Pancreas (tissue), 10 donors: ENCODE measurements at regions of chr7 and their contacts with region 1.

Region 1: GRCh38 chr7:25259587-25260243 is 31.4 kb upstream of the NPVF start:
- DNase-seq: peak in 4 of 6 donors; percentile 29 to 82 (median 57)
- ATAC-seq: peak; percentile 82 to 93 (median 92)
- H3K4me3 ChIP-seq: no peak overlapping the region
- H3K27ac ChIP-seq: no peak overlapping the region
- H3K4me1 ChIP-seq: peaks cover 0 to 3% (median 0%) of the 10 kb centered on the region in 3 donors
- H3K27me3 ChIP-seq: no peaks in the 10 kb centered on the region
- CTCF ChIP-seq: peak; percentile 57 to 79 (median 71)

Region 2: GRCh38 chr7:25389489-25390106 is 129.9 kb after region 1 on chr7:
- intact Hi-C with region 1: loop called in 2 of 3 experiments (anchors 2 to 5 kb)
- DNase-seq: peak in 3 of 6 donors; percentile 20 to 36 (median 31)
- ATAC-seq: peak; percentile 31 to 68 (median 55)
- H3K4me3 ChIP-seq: no peak overlapping the region
- H3K27ac ChIP-seq: no peak overlapping the region
- H3K4me1 ChIP-seq: peaks cover 18 to 36% (median 34%) of the 10 kb centered on the region in 3 donors
- H3K27me3 ChIP-seq: no peaks in the 10 kb centered on the region
- CTCF ChIP-seq: peak in 3 of 4 donors; percentile 29 to 59 (median 42)

Region 3: DNA sequence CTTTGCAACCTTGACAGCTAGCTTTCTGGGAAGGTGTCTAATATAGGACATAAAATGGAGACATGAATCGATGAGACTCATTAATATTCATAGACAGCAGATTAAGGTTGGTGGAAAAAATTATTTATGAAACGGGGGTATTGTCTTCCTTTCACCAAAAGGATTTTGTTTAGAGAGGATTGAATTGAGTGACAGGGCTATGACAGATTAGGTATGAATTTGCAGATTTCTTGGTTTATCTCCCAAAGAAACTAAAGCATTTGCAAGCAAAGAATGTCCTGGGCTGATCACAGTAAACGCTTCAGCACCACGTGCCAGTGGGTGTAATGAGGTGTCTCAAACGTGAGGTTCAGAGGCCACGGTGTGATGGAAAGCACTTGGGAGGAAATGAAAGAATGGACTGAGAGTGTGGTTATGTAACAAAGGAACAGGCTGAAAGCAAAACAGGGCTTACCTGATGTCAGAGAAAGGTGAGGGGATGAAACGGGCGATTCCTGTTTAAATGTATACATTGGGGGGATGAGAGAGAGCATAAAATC is 297.7 kb after region 1 on chr7:
- intact Hi-C with region 1: loop called in 2 of 3 experiments (anchors 5 to 10 kb)
- DNase-seq: no peak
- ATAC-seq: peak in 1 of 4 donors; percentile 29
- H3K4me3 ChIP-seq: no peak overlapping the region
- H3K27ac ChIP-seq: no peak overlapping the region
- H3K4me1 ChIP-seq: no peaks in the 10 kb centered on the region
- H3K27me3 ChIP-seq: no peaks in the 10 kb centered on the region
- CTCF ChIP-seq: no peak

Region 4: DNA sequence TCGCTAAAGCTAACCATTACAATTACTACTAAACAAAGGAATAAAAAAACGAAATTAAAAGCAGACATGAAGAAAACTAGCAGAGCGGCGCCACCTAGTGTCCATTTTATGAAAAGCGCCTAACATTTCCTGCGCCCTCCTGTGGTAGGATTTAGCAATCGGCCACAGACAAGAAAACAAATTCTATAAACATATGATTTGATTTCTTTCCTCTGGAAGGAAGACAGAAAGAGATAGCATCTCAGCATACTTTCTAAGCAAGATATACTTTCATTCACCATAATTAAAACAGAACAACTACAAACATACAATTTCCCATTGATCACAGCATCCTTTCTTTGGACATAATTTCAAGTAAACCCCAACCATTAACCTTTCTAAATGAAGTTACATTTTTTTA is 306.2 kb after region 1 on chr7:
- intact Hi-C with region 1: loop called in 2 of 3 experiments (anchors 5 to 10 kb)
- DNase-seq: peak in 5 of 6 donors; percentile 25 to 71 (median 45)
- ATAC-seq: peak in 3 of 4 donors; percentile 30 to 79 (median 67)
- H3K4me3 ChIP-seq: no peak overlapping the region
- H3K27ac ChIP-seq: no peak overlapping the region
- H3K4me1 ChIP-seq: no peaks in the 10 kb centered on the region
- H3K27me3 ChIP-seq: no peaks in the 10 kb centered on the region
- CTCF ChIP-seq: peak; percentile 98 to 100 (median 100)

Region 5: GRCh38 chr7:25851332-25852210 is 591.9 kb after region 1 on chr7:
- intact Hi-C with region 1: loop called in 1 of 3 experiments (anchors 5 kb)
- DNase-seq: peak; percentile 62 to 91 (median 79)
- ATAC-seq: peak; percentile 79 to 88 (median 84)
- H3K4me3 ChIP-seq: peak overlapping the region in 1 of 4 donors; percentile 27
- H3K27ac ChIP-seq: no peak overlapping the region
- H3K4me1 ChIP-seq: peaks cover 0 to 16% (median 7%) of the 10 kb centered on the region in 3 donors
- H3K27me3 ChIP-seq: peaks cover 3 to 36% (median 33%) of the 10 kb centered on the region in 4 donors
- CTCF ChIP-seq: peak; percentile 65 to 78 (median 76)

Region 6: GRCh38 chr7:26307226-26307625 is 1047.5 kb after region 1 on chr7:
- intact Hi-C with region 1: no loop called
- DNase-seq: peak in 1 of 6 donors; percentile 36
- ATAC-seq: peak in 2 of 4 donors; percentile 76 to 79
- H3K4me3 ChIP-seq: no peak overlapping the region
- H3K27ac ChIP-seq: peak overlapping the region in 2 of 4 donors; percentile 55 to 61
- H3K4me1 ChIP-seq: peaks cover 0 to 35% (median 0%) of the 10 kb centered on the region in 3 donors
- H3K27me3 ChIP-seq: no peaks in the 10 kb centered on the region
- CTCF ChIP-seq: no peak